Activated naive CD4-positive, alpha-beta T cell treated with anti-CD3 and anti-CD28 coated beads for 36 hours (primary cell): ENCODE measurements at regions of chr14 and their contacts with region 1.

Region 1: DNA sequence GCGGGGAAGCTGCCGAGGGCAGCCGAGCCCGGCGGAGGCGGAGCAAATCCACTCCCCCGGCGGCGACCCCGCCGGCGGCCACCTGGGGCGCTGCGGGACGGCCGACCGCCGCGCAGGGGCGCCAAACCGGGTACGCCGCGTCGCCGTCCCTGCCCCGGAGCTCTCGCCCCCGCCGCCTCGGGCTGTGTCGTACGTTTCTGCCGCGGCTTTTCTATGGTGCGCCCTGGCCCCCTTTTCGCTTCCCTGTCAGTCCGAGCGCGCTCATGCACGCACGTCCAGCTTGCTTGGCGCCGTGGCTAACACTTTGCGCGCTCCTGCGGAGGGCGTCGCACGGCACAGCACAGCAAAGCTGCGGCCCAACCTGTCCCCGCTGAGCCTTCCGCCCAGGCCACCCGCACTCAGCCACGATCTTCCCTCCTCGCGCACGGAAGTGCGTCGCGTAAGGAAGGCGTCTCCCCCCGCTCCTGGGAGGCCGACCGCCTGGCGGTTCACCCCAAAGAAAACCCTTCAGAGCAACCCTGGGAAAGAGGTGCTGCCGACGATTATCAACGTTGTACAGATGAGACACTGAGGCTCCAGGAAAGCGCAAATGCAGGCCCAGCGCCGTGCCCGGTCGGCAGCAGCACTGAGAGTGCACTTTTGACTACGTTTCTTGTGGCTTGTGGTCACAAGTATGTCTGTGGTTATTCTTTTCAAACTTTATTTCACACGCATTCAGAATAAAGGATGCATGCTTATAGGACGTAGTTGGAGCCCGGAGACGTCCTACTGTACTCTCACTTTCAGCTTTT is at the start of gene HECTD1:
- DNase-seq: peak; percentile 89
- H3K4me3 Mint-ChIP-seq: peak within 1 kb of the TSS; percentile 92
- H3K27ac Mint-ChIP-seq: peak within 1 kb of the TSS; percentile 100
- H3K4me1 Mint-ChIP-seq: peaks cover 34% of the 10 kb centered on the region
- H3K27me3 Mint-ChIP-seq: no peaks in the 10 kb centered on the region
- total RNA-seq, gene HECTD1: 61.5 to 64.1 TPM

Region 2: DNA sequence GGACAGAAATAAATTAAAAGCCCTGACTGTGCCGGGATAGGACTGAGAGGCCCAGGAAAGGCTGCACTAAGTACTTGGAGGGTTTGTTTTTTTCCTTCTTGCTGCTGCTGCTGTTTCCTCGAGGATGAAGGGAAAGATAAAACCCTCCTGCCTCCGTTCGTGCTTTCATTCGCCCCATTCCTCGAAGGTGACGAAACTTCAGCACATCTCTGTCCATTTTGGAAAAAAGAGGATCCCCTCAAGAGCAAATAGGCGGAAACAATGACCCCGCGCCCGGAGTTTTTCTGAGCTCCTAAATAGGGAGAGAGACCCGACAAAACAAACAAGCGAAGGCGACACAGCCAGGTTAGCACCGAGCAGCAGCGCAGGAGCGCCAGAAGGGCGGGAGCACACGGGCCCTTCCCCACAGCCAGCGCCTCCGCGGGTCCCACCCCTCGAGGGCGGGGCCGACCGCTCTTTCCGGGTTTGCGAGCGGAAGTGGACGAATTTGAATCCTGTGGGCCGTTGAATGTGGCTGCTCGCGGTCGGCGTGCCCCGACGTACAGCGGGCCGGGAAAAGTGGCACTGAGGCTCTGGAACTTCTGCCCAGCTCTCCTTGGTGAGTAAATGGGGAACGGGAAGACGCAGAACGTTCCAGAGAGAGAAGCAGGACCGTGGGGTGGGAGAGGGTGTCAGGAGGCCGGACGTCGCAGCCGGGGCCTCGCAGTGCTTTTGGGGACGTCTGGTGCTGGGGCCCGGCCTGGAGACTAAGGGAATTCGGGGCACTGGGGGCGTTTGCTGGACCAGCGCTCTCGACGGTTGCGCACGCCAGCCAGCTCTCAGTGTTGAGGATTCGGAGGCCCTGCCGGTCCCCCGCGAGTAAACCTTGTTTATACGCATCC is 649.0 kb before region 1 on chr14 and contains the start of gene G2E3:
- CTCF ChIA-PET with region 1: no interaction called
- intact Hi-C with region 1: loop called (anchors 5 kb)
- DNase-seq: peak; percentile 92
- H3K4me3 Mint-ChIP-seq: peak within 1 kb of the TSS; percentile 100
- H3K27ac Mint-ChIP-seq: peak within 1 kb of the TSS; percentile 99
- H3K4me1 Mint-ChIP-seq: peaks cover 30% of the 10 kb centered on the region
- H3K27me3 Mint-ChIP-seq: no peaks in the 10 kb centered on the region
- total RNA-seq, gene G2E3: 28.6 to 29.1 TPM

Region 3: DNA sequence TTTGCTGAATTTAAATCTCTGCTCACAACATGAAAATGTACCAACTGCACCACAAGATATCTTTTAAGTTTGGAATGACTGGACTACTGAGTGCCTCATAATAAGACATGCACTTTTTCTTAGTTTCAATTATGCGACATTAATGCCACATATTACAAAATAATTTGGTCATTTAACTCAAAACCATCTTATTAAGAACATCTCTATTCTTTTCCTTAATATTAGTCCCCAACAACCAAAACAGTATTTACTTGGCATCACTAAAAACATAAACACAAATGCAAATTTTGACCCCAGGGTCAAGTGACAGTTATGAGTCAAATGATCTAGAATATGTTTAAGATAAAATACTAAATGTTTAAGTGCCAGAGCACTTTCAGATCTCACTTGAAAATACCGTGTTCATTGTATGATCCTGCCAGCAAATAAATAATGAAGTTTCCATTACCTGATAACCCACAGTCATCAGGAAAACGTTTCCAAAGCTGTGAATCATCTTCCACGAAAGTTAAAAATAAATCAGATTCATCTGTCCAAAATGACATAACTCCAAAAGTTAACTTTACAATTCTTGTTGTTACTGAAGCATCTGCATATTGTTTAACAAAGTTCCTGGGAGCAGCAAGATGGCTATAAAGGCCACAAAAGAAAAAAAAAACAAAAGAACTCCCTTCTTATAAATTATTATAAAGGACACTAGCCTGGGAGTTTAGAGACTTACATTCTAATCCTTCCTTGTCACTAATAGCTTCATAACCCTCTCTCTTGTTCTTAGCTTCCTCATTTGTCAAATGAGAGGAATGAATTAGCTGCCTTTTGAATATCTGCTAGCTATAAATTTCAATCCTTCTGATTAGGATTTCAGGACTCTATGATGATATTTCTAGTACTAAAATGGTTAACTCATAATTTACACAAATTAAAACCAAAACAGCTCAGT is 213.0 kb before region 1 on chr14:
- CTCF ChIA-PET with region 1: no interaction called
- intact Hi-C with region 1: loop called (anchors 2 kb)
- DNase-seq: no peak
- H3K4me3 Mint-ChIP-seq: peak overlapping the region; percentile 10
- H3K27ac Mint-ChIP-seq: peak overlapping the region; percentile 66
- H3K4me1 Mint-ChIP-seq: peaks cover 47% of the 10 kb centered on the region
- H3K27me3 Mint-ChIP-seq: no peaks in the 10 kb centered on the region

Region 4: GRCh38 chr14:31194095-31194494 is 13.9 kb before region 1 on chr14:
- CTCF ChIA-PET with region 1: interaction called, 4 read pairs
- intact Hi-C with region 1: loop called (anchors 1 kb)
- DNase-seq: peak; percentile 30
- H3K4me3 Mint-ChIP-seq: no peak overlapping the region
- H3K27ac Mint-ChIP-seq: no peak overlapping the region
- H3K4me1 Mint-ChIP-seq: peaks cover 46% of the 10 kb centered on the region
- H3K27me3 Mint-ChIP-seq: no peaks in the 10 kb centered on the region

Region 5: GRCh38 chr14:31420319-31421111 is 212.6 kb after region 1 on chr14 and contains the start of gene HEATR5A:
- CTCF ChIA-PET with region 1: no interaction called
- intact Hi-C with region 1: loop called (anchors 1 kb)
- DNase-seq: peak; percentile 90
- H3K4me3 Mint-ChIP-seq: peak within 1 kb of the TSS; percentile 91
- H3K27ac Mint-ChIP-seq: peak within 1 kb of the TSS; percentile 82
- H3K4me1 Mint-ChIP-seq: peaks cover 17% of the 10 kb centered on the region
- H3K27me3 Mint-ChIP-seq: no peaks in the 10 kb centered on the region
- total RNA-seq, gene HEATR5A: 3.5 to 6.0 TPM

Region 6: GRCh38 chr14:31937721-31938346 is 729.9 kb after region 1 on chr14:
- CTCF ChIA-PET with region 1: no interaction called
- intact Hi-C with region 1: loop called (anchors 10 kb)
- DNase-seq: peak; percentile 89
- H3K4me3 Mint-ChIP-seq: no peak overlapping the region
- H3K27ac Mint-ChIP-seq: peak overlapping the region; percentile 20
- H3K4me1 Mint-ChIP-seq: peaks cover 20% of the 10 kb centered on the region
- H3K27me3 Mint-ChIP-seq: no peaks in the 10 kb centered on the region